ENCODE measurements at regions of chr7 and their contacts with region 1.

Region 1: GRCh38 chr7:150737265-150738055 is at the start of gene GIMAP5:
- DNase-seq: no peak
- ATAC-seq: peak; percentile 58 to 78 (median 74)
- H3K4me3 ChIP-seq: peak within 1 kb of the TSS; percentile 8 to 68 (median 60)
- H3K27ac ChIP-seq: peak within 1 kb of the TSS; percentile 66 to 93 (median 88)
- H3K4me1 ChIP-seq: peaks cover 0 to 39% (median 30%) of the 10 kb centered on the region in 9 donors
- H3K27me3 ChIP-seq: no peaks in the 10 kb centered on the region
- CTCF ChIP-seq: no peak
- total RNA-seq, gene GIMAP5: 6.5 to 27.2 (median 11.8) TPM

Region 2: DNA sequence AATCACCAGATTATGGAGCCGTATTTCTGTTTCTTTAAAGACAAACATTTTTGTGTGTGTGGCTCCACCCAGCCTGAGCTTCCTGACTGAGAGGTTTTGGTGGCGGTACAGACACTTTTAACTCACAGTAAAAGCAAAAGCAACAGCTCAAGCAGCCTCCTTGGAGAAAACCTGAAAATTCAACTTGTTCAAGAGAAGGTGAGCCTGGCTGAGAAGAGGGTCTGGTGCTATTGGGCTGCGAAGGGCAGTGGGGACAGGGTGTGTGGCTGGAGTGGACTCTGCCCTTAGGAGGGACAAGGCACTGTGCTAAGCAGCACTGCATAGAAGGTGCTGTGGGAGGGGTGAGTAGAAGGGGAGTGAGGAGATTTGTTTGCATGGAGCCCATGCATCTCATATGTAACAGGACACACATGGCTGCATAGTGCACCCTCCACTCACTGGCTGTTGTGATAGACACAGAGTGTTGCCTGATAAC is 222.7 kb before region 1 on chr7 and contains the start of gene GIMAP7:
- intact Hi-C with region 1: loop called in 1 of 10 experiments (anchors 5 kb)
- DNase-seq: peak in 1 of 2 donors; percentile 38
- ATAC-seq: peak; percentile 54 to 83 (median 80)
- H3K4me3 ChIP-seq: peak within 1 kb of the TSS; percentile 32 to 68 (median 56)
- H3K27ac ChIP-seq: peak within 1 kb of the TSS; percentile 60 to 95 (median 80)
- H3K4me1 ChIP-seq: peaks cover 0 to 25% (median 3%) of the 10 kb centered on the region in 9 donors
- H3K27me3 ChIP-seq: no peaks in the 10 kb centered on the region
- CTCF ChIP-seq: no peak
- total RNA-seq, gene GIMAP7: 7.5 to 41.2 (median 19.6) TPM

Region 3: DNA sequence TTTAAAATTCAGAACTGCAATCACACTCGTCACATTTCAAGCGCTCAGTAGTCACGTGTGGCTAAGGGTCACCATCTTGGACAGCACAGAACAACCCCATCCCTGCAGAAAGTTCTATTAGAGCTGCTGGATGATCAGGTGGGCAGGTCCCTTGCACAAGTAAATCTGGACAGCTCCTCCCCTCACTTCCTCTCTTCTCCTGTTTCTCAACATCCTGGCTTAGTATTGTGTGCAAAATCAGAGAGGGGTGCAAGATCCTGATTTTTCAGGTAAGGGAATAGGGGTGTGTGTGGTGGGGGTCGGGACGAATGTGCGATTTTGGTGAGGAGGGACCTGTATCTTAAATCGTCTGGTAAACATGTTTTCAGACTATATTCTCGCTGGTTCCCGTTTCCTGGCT is 170.3 kb before region 1 on chr7 and contains the start of gene GIMAP4:
- intact Hi-C with region 1: loop called in 1 of 10 experiments (anchors 5 kb)
- DNase-seq: peak in 1 of 2 donors; percentile 51
- ATAC-seq: peak; percentile 64 to 90 (median 82)
- H3K4me3 ChIP-seq: peak within 1 kb of the TSS; percentile 37 to 72 (median 60)
- H3K27ac ChIP-seq: peak within 1 kb of the TSS; percentile 55 to 97 (median 89)
- H3K4me1 ChIP-seq: peaks cover 0 to 33% (median 11%) of the 10 kb centered on the region in 9 donors
- H3K27me3 ChIP-seq: no peaks in the 10 kb centered on the region
- CTCF ChIP-seq: no peak
- total RNA-seq, gene GIMAP4: 19.7 to 68.6 (median 31.0) TPM

Region 4: GRCh38 chr7:150586785-150587152 is 150.7 kb before region 1 on chr7:
- intact Hi-C with region 1: loop called in 1 of 10 experiments (anchors 5 kb)
- DNase-seq: peak in 1 of 2 donors; percentile 49
- ATAC-seq: peak; percentile 89 to 97 (median 93)
- H3K4me3 ChIP-seq: peak overlapping the region in 2 of 10 donors; percentile 14 to 25
- H3K27ac ChIP-seq: peak overlapping the region; percentile 59 to 95 (median 78)
- H3K4me1 ChIP-seq: peaks cover 0 to 41% (median 29%) of the 10 kb centered on the region in 9 donors
- H3K27me3 ChIP-seq: no peaks in the 10 kb centered on the region
- CTCF ChIP-seq: no peak

Region 5: GRCh38 chr7:150620617-150621371 is 116.7 kb before region 1 on chr7:
- intact Hi-C with region 1: loop called in 1 of 10 experiments (anchors 10 kb)
- DNase-seq: no peak
- ATAC-seq: no peak
- H3K4me3 ChIP-seq: no peak overlapping the region
- H3K27ac ChIP-seq: peak overlapping the region in 6 of 10 donors; percentile 1 to 71 (median 27)
- H3K4me1 ChIP-seq: peaks cover 0 to 20% (median 0%) of the 10 kb centered on the region in 9 donors
- H3K27me3 ChIP-seq: no peaks in the 10 kb centered on the region
- CTCF ChIP-seq: no peak

Region 6: DNA sequence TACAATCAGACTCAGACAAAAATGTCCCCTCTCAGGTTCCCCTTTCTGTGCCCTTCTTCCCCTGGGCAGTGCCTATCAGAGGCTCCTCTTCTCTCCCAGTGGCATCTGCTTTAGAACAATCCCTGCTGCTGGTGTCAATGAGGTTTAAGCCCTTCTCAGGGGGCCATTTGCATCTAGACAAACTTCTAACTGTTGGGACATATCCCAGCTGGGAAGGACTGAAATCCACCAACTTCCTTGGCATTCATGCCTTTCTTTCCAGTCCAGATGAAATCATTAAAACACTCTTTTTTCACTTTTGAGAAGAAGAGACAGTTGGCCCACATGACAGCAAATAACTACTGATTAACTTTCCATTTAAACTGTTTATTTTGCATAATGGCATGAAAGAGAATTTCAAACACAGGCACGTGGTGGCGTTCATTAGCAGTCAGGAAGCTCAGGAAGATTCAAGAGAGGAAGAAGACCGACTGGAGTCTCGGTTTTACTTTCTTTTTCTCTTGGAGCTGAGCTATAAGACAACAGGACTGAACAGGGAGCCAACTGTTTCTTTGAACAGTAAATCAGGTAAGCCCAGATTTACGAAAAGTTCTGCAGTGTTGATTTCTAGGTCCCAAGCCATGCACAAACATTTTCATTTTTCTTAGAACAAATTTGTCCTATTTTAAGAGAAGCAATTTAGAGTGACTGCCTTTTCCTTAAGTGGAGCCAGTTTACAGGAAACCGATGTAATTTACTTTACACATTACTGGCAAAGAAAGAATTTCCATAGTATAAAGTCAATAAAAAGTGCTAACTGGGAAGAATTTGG is 52.0 kb before region 1 on chr7 and contains the start of gene GIMAP2:
- intact Hi-C with region 1: loop called in 2 of 10 experiments (anchors 5 to 10 kb)
- DNase-seq: peak in 1 of 2 donors; percentile 23
- ATAC-seq: peak in 7 of 8 donors; percentile 61 to 92 (median 89)
- H3K4me3 ChIP-seq: peak within 1 kb of the TSS; percentile 14 to 67 (median 52)
- H3K27ac ChIP-seq: peak within 1 kb of the TSS; percentile 55 to 94 (median 80)
- H3K4me1 ChIP-seq: peaks cover 0 to 45% (median 12%) of the 10 kb centered on the region in 9 donors
- H3K27me3 ChIP-seq: no peaks in the 10 kb centered on the region
- CTCF ChIP-seq: no peak
- total RNA-seq, gene GIMAP2: 2.1 to 17.5 (median 4.6) TPM

Region 7: GRCh38 chr7:150753826-150754603 is 16.6 kb after region 1 on chr7:
- intact Hi-C with region 1: loop called in 2 of 10 experiments (anchors 2 kb)
- DNase-seq: peak in 1 of 2 donors; percentile 43
- ATAC-seq: peak; percentile 36 to 67 (median 54)
- H3K4me3 ChIP-seq: no peak overlapping the region
- H3K27ac ChIP-seq: peak overlapping the region in 9 of 10 donors; percentile 25 to 87 (median 83)
- H3K4me1 ChIP-seq: peaks cover 20 to 68% (median 51%) of the 10 kb centered on the region in 9 donors
- H3K27me3 ChIP-seq: no peaks in the 10 kb centered on the region
- CTCF ChIP-seq: peak in 7 of 9 donors; percentile 8 to 62 (median 50)